Adrenal gland (tissue), 19 donors: ENCODE measurements at regions of chr12 and their contacts with region 1.

Region 1: DNA sequence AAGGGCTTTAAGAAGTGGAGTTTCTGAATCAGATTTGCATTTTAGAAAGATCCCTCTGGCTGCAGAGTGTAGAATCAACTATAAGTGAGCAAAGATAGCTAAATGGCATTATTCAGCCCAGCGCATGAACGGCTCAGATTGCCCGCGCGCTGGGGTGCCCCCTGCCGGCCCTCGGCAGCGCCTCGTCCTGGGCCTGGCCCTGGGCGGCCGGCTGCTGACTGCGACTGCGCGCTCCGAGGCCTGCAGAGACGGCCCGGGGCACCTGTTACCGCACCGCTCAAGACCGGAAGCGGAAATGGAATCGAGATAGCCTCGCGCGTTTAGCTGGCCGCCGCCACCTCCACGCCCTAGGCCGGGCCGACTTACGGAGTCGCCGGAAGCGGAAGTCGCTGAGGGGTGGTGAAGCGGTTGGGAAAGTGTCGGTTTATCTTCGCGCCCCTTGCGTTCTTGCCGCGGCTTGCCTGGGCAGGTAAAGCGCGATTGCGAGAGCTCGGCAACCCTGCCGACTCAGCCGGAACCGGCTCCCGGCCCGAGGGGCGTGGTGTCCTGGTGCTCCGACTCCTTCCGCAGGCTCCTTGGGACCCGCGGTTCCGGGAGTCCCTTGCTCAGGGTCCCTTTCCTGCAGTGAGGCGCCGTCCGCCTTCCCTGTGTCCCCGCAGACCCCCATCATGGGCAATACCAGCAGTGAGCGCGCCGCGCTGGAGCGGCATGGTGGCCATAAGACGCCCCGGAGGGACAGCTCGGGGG is at the start of gene PRKAB1:
- DNase-seq: peak; percentile 96 to 98 (median 98)
- H3K4me3 ChIP-seq: peak within 1 kb of the TSS; percentile 68 to 98 (median 77)
- H3K27ac ChIP-seq: peak within 1 kb of the TSS; percentile 76 to 94 (median 88)
- H3K4me1 ChIP-seq: peaks cover 27 to 50% of the 10 kb centered on the region in 2 donors
- H3K27me3 ChIP-seq: no peaks in the 10 kb centered on the region
- CTCF ChIP-seq: peak; percentile 68 to 91 (median 89)
- POLR2A ChIP-seq: peak; percentile 68 to 80
- total RNA-seq, gene PRKAB1: 21.5 to 75.8 (median 37.0) TPM

Region 2: DNA sequence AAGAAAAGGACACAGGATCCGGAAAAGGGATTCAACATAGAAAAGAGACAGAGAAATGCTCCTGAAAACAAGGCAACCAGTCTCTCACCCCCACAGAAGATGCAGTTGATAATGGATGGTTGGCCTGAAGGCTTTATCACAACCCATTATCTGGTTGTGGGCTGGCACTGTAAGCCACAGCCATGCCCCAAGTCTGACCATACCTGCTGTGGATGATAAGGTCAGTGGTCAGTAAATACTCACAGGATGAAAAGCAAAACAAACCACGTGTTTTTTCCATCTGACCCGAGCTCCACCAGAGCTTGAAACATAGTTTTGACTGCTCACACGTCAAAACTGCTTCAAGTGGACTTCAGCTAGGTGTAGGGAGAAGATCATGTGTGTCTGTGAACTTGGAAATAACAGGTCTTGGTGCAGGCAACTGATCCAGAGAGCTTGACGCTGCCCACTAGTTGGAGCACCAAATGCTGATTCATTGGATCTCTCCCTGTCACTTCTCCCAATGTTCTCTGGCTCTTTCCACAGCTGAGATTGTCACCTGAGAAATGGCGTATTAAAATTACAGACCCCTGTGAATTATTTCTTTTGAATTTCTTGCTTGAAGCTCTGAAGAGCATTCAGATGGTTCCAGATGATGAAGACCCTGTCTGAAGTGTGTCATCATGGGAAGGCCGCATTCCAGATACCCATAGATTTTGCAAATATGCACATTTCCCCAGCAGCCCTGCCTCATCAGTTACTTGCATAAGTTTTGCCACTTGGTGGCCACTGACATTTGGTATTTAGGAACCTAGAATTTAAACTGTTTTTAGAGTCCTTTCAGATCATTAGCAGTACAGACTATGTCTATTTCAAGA is 65.6 kb before region 1 on chr12:
- intact Hi-C with region 1: no loop called
- DNase-seq: no peak
- H3K4me3 ChIP-seq: no peak overlapping the region
- H3K27ac ChIP-seq: no peak overlapping the region
- H3K4me1 ChIP-seq: no peaks in the 10 kb centered on the region
- H3K27me3 ChIP-seq: peaks cover 2% of the 10 kb centered on the region
- CTCF ChIP-seq: no peak
- POLR2A ChIP-seq: no peak

Region 3: DNA sequence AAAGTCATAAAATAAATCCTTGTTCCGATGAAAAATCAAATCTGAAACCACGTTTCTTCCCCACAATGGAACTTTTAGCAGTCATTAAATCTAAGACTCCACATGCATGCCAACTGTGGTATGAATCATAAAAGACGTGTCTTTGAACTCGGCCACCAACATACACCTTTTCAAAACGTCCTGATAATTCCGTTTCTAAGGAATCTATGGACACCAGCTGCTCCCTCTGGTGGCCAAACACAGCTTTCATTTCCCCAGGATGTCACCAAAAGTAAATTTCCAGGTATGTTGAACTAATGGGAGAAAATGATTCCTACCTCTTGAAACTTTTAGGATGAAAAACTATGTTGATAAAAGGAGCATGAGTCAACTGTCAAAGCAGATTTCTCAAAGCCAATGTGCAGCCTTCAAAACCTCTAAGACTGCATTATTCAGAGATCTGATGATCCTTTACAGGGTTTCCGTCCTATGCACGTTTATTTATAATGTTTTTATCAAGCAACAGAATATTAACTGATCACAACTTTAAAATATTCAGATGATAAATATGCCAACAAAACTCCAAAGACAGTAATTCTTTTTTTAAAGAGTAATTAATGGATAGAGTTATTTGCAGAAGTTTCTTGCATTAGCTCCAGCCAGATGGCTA is 113.2 kb after region 1 on chr12:
- intact Hi-C with region 1: loop called in 1 of 2 experiments (anchors 10 kb)
- DNase-seq: peak; percentile 42 to 83 (median 69)
- H3K4me3 ChIP-seq: no peak overlapping the region
- H3K27ac ChIP-seq: peak overlapping the region in 2 of 5 donors; percentile 6 to 17
- H3K4me1 ChIP-seq: peaks cover 0 to 8% of the 10 kb centered on the region in 2 donors
- H3K27me3 ChIP-seq: no peaks in the 10 kb centered on the region
- CTCF ChIP-seq: peak; percentile 68 to 90 (median 83)
- POLR2A ChIP-seq: no peak

Region 4: GRCh38 chr12:119902084-119902509 is 234.3 kb after region 1 on chr12:
- intact Hi-C with region 1: loop called in 1 of 2 experiments (anchors 10 kb)
- DNase-seq: peak; percentile 67 to 87 (median 78)
- H3K4me3 ChIP-seq: no peak overlapping the region
- H3K27ac ChIP-seq: no peak overlapping the region
- H3K4me1 ChIP-seq: no peaks in the 10 kb centered on the region
- H3K27me3 ChIP-seq: no peaks in the 10 kb centered on the region
- CTCF ChIP-seq: peak; percentile 65 to 81 (median 77)
- POLR2A ChIP-seq: no peak